ENCODE measurements at regions of chr4 and their contacts with region 1.

Region 1: DNA sequence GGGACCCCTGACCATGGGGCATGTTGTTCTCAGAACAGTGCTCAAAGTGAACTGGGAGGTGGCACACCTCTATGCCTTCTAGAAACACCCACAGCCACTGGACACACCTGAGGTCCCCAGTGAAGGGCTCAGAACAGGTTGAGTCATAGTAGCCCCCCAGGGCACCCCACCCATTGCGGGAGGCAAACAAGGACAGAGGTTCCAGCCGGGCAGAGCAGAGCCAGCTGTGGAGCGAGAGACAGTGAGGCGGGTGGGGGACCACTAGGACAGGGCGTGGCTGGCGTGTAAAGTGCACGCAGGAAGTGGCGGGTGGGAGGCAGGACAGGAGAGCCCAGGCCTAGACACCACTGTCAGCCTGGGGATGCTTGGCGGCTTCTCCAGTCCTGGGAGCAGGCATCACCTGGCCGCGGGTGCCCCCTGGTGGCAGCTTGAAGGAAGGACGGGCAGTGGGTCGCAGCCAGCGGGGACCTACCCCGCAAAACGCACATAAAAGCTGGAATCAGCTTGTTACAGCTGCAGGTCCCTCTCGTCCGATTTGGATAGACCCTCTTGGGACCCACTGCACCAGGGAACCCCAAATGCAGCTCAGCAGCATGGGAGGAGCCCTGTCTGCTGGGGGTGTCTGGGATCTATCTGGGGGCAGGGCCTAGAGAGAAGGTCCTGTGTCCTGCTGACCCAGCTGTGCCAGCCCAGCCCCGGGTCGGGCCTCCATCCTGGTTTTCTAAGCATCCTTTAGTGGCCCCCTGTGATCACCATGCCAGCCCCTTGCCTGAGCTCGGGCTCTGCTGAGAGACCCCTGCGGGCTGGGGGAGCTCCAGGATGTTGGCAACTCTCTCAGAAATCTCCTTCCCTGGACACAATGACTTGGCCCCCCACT is 57.6 kb downstream of the WFS1 start:
- DNase-seq: peak; percentile 50 to 55
- ATAC-seq: peak; percentile 72 to 84
- H3K4me3 ChIP-seq: no peak overlapping the region
- H3K27ac ChIP-seq: no peak overlapping the region
- H3K4me1 ChIP-seq: no peaks in the 10 kb centered on the region
- H3K27me3 ChIP-seq: peaks cover 0 to 6% (median 3%) of the 10 kb centered on the region in 3 donors
- CTCF ChIP-seq: peak; percentile 70 to 95 (median 92)
- POLR2A ChIP-seq: no peak

Region 2: GRCh38 chr4:5998333-5998936 is 328.8 kb before region 1 on chr4:
- in situ Hi-C with region 1: no loop called
- intact Hi-C with region 1: loop called (anchors 10 kb)
- DNase-seq: no peak
- ATAC-seq: no peak
- H3K4me3 ChIP-seq: no peak overlapping the region
- H3K27ac ChIP-seq: no peak overlapping the region
- H3K4me1 ChIP-seq: no peaks in the 10 kb centered on the region
- H3K27me3 ChIP-seq: peaks cover 0 to 3% (median 0%) of the 10 kb centered on the region in 3 donors
- CTCF ChIP-seq: peak in 4 of 5 experiments; percentile 42 to 69 (median 57)
- POLR2A ChIP-seq: no peak

Region 3: DNA sequence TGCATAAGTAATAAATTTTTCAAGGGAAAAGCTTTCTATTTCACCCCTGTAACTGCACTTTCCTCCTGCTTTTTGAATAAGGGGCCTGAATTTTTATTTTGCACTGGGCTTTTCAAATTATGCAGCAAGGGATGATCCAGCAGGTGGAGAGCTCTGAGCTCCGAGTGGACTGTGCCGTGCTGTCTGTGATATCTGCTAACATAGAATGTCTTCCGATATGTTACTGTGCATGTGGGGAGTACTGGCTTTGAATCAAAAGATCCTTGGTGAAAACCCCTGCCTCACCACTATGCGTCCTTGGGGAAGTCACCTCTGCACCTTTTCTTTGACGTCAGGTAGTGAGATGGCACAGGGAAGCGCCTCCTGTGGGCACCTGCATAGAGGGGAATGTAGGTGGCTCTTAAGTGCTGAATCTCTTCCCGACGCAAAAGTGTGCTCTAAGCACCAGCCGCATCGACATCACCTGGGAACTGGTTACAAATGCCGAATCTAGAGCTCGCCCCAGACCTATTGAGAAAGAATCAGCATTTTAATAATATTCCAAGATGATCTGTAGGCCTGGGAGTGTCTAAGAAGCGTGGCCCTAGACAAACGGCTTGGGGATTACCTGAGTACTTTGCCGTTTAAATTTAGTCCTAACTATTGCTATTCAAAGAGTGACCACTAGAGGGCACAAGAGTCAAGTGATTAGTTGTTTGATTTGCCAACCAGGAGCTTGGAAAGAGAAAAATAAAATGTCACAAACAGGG is 76.9 kb before region 1 on chr4:
- in situ Hi-C with region 1: loop called (anchors 5 kb)
- intact Hi-C with region 1: loop called (anchors 1 kb)
- DNase-seq: no peak
- ATAC-seq: peak; percentile 63 to 65
- H3K4me3 ChIP-seq: no peak overlapping the region
- H3K27ac ChIP-seq: no peak overlapping the region
- H3K4me1 ChIP-seq: no peaks in the 10 kb centered on the region
- H3K27me3 ChIP-seq: peaks cover 11 to 20% (median 18%) of the 10 kb centered on the region in 3 donors
- CTCF ChIP-seq: peak; percentile 67 to 86 (median 83)
- POLR2A ChIP-seq: no peak